ENCODE measurements at regions of chr7 and their contacts with region 1.

Region 1: GRCh38 chr7:86914551-86914950 is 144.9 kb downstream of the ELAPOR2 start:
- DNase-seq: peak in 1 of 5 donors; percentile 10
- H3K4me3 ChIP-seq: no peak overlapping the region
- H3K4me3 Mint-ChIP-seq: no peak overlapping the region
- H3K27ac ChIP-seq: no peak overlapping the region
- H3K27ac Mint-ChIP-seq: no peak overlapping the region
- H3K4me1 ChIP-seq: no peaks in the 10 kb centered on the region
- H3K4me1 Mint-ChIP-seq: no peaks in the 10 kb centered on the region
- H3K27me3 ChIP-seq: no peaks in the 10 kb centered on the region
- H3K27me3 Mint-ChIP-seq: no peaks in the 10 kb centered on the region

Region 2: DNA sequence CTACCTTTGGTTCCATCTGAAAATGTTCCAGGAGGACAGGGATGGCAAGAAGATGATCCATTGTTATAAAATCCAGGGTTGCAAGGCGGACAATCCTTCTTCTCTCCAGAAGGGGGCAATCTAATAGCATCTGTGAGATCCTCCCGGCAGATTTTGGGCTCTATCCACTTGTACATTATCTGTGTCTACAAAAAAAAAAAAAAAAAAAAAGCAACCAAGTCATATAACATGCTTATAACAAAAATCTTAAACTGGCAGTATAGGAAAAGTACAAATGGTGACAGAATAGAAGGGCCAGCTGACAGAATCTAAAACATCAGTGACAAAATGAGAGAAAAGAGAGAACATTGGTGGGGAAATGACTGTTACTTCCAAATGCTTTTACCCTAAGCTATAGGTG is 12.2 kb after region 1 on chr7:
- CTCF ChIA-PET with region 1: interaction called, 24 read pairs
- POLR2A ChIA-PET with region 1: no interaction called
- intact Hi-C with region 1: no loop called
- DNase-seq: peak in 4 of 5 donors; percentile 39 to 60 (median 53)
- H3K4me3 ChIP-seq: no peak overlapping the region
- H3K4me3 Mint-ChIP-seq: no peak overlapping the region
- H3K27ac ChIP-seq: no peak overlapping the region
- H3K27ac Mint-ChIP-seq: peak overlapping the region in 1 of 7 donors; percentile 63
- H3K4me1 ChIP-seq: no peaks in the 10 kb centered on the region
- H3K4me1 Mint-ChIP-seq: no peaks in the 10 kb centered on the region
- H3K27me3 ChIP-seq: no peaks in the 10 kb centered on the region
- H3K27me3 Mint-ChIP-seq: peaks cover 0 to 3% of the 10 kb centered on the region in 2 donors

Region 3: GRCh38 chr7:86978808-86979506 is 64.4 kb after region 1 on chr7:
- CTCF ChIA-PET with region 1: no interaction called
- POLR2A ChIA-PET with region 1: no interaction called
- intact Hi-C with region 1: no loop called
- DNase-seq: peak; percentile 74 to 89 (median 84)
- H3K4me3 ChIP-seq: no peak overlapping the region
- H3K4me3 Mint-ChIP-seq: peak overlapping the region in 6 of 8 donors; percentile 30 to 74 (median 44)
- H3K27ac ChIP-seq: peak overlapping the region; percentile 65
- H3K27ac Mint-ChIP-seq: peak overlapping the region; percentile 87 to 98 (median 95)
- H3K4me1 ChIP-seq: peaks cover 34% of the 10 kb centered on the region
- H3K4me1 Mint-ChIP-seq: peaks cover 28 to 55% (median 44%) of the 10 kb centered on the region in 4 donors
- H3K27me3 ChIP-seq: no peaks in the 10 kb centered on the region
- H3K27me3 Mint-ChIP-seq: no peaks in the 10 kb centered on the region